CD4-positive, alpha-beta T cell (primary cell): ENCODE measurements at regions of chr10 and their contacts with region 1.

Region 1: DNA sequence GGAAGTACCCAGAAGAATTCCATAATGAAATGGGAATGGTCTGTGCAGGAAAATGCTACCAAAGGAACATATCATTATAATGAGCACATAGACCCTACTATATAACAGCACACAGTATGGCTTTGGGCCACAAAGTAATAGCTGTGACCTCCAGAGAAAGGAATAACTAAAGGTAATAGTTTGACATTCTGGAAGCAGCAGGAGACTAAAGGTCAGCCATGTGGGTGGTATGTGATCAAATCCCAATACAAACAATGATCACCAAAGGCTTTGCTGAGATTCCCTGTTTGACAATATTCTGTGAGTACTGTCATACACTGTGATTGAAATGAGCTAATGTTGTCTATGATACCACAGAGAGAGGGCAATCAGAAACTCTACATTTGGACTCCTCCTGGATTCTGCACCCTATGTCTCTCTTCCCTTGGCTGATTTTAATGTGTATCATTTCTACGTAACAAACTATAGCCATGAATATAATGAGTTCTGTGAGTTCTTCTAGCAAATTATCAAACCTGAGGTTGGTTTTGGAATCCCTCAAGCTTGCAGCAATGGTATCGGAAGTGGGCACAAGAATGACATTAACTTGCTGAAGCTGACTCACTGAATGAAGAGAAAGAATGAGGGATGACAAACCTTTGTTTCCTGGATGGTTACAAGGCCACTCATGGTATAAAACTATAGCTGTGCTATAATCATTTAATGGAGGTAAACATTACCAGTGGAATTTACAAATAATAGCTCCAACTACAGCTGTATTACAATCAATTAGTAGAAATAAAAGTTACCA is 99.6 kb downstream of the JMJD1C start:
- DNase-seq: no peak
- ATAC-seq: no peak
- H3K4me3 ChIP-seq: no peak overlapping the region
- H3K4me3 Mint-ChIP-seq: no peak overlapping the region
- H3K27ac ChIP-seq: no peak overlapping the region
- H3K27ac Mint-ChIP-seq: no peak overlapping the region
- H3K4me1 ChIP-seq: no peaks in the 10 kb centered on the region
- H3K4me1 Mint-ChIP-seq: peaks cover 5% of the 10 kb centered on the region
- H3K27me3 ChIP-seq: no peaks in the 10 kb centered on the region
- H3K27me3 Mint-ChIP-seq: no peaks in the 10 kb centered on the region
- CTCF ChIP-seq: no peak

Region 2: DNA sequence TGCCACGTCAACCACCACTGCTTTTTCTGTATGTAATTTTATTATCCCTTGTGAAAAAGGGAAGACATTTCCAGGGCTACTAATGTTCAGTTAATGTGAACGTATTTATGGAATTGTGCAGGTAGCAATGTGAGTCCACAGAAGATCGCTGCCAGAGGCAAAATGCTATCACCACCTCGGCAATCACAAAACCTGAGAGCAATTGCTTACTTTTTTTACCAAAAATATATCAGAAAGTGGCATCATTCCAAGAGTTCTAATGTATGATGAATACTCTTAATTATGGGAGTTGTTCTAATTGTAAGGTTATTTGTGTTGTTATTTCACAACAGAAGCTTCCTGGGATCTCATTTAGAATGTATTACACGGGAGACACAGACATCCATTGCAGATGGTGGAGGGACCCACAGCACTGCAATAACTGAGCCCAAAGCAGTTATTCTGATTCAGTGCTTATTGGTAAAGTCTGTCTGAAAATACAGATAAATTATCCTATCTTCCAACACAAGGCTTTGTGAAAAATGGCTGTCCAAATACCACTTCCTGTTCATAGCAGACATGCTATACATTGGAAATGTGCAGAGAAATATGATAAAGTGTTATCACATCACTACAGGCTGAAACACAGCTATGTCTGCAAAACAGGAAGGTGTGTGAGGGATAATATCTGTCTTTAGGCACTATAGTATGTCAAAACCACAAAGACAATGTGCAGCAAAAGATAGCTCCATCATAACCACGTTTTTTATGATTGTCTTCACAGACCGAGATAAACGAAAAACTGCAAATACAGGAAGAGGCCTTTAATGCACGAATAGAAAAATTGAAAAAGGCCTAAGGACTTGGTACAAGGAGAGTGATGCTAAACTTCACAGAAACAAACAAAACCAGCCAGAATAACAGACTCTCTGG is 1600.7 kb before region 1 on chr10:
- CTCF ChIA-PET with region 1: no interaction called
- POLR2A ChIA-PET with region 1: no interaction called
- intact Hi-C with region 1: loop called in 1 of 2 experiments (anchors 5 kb)
- DNase-seq: peak in 3 of 14 experiments; percentile 15 to 46 (median 18)
- ATAC-seq: peak; percentile 86
- H3K4me3 ChIP-seq: peak overlapping the region; percentile 1
- H3K4me3 Mint-ChIP-seq: no peak overlapping the region
- H3K27ac ChIP-seq: peak overlapping the region; percentile 29 to 42
- H3K27ac Mint-ChIP-seq: peak overlapping the region; percentile 74
- H3K4me1 ChIP-seq: peaks cover 6% of the 10 kb centered on the region
- H3K4me1 Mint-ChIP-seq: peaks cover 40% of the 10 kb centered on the region
- H3K27me3 ChIP-seq: no peaks in the 10 kb centered on the region
- H3K27me3 Mint-ChIP-seq: no peaks in the 10 kb centered on the region
- CTCF ChIP-seq: no peak

Region 3: GRCh38 chr10:63562857-63563256 is 196.7 kb after region 1 on chr10:
- CTCF ChIA-PET with region 1: no interaction called
- POLR2A ChIA-PET with region 1: no interaction called
- intact Hi-C with region 1: no loop called
- DNase-seq: no peak
- ATAC-seq: no peak
- H3K4me3 ChIP-seq: no peak overlapping the region
- H3K4me3 Mint-ChIP-seq: no peak overlapping the region
- H3K27ac ChIP-seq: no peak overlapping the region
- H3K27ac Mint-ChIP-seq: no peak overlapping the region
- H3K4me1 ChIP-seq: no peaks in the 10 kb centered on the region
- H3K4me1 Mint-ChIP-seq: peaks cover 16% of the 10 kb centered on the region
- H3K27me3 ChIP-seq: no peaks in the 10 kb centered on the region
- H3K27me3 Mint-ChIP-seq: no peaks in the 10 kb centered on the region
- CTCF ChIP-seq: no peak